Breast epithelium (tissue), 4 donors: ENCODE measurements at regions of chr4 and their contacts with region 1.

Region 1: DNA sequence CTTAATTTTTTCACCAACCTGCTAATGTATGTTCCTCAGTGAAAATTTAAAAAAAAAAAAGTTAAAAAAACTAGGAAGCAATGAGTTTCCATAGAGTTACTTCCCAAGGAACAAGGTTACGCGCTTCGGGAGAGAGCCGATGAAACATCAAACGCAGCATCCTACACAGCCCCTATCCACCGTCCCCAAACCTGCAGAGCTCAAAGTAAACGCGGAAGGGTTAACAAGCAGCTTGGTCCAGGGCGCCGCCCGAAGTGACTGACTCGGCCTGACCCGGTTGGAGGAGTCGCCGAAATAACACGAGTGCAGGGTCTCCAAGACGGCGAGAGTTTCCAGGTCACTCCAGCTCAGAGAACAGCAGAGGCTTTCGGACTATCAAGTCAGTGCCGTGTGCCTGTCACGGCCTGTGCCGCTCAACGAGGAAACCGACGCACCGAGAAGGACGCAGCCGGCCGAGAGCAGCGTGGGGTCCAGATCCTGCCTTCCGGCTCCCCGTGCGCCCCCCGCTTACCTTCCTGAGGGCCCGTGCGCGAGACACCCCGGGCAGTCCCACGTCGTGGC is 512 bp downstream of the NOP14 start:
- DNase-seq: no peak
- H3K4me3 ChIP-seq: peak overlapping the region; percentile 93 to 96 (median 93)
- H3K27ac ChIP-seq: peak overlapping the region; percentile 80 to 85
- H3K4me1 ChIP-seq: peaks cover 6 to 9% of the 10 kb centered on the region in 2 donors
- H3K27me3 ChIP-seq: no peaks in the 10 kb centered on the region
- CTCF ChIP-seq: no peak
- POLR2A ChIP-seq: no peak

Region 2: DNA sequence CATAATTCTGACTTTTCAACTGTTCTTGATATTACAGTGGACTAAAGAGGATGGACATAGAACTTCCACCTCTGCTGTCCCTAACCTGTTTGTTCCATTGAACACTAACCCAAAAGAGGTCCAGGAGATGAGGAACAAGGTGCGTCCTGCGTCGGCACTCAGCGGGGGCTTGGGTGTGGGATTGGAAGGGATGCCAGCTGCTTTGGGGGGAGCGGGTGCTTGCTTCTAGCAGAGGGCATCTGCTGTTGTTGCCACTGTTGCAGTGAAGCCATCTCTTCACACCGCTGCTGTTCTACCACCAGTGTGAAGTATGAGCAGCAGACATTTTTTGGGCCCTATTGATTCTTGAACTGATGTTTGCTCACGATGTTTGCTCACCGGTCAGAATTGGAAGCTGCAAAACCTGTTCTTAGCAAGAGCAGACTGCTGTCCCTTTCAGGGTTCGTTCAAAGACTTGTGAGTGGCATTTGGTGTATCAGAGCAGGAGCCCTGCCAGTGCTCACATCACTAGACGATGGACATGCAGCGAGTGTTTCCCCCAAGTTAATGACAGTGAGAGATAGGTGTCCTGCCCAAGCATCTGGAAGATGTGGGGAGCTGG is 54.9 kb before region 1 on chr4:
- intact Hi-C with region 1: loop called (anchors 2 kb)
- DNase-seq: no peak
- H3K4me3 ChIP-seq: no peak overlapping the region
- H3K27ac ChIP-seq: peak overlapping the region in 1 of 2 donors; percentile 27
- H3K4me1 ChIP-seq: no peaks in the 10 kb centered on the region
- H3K27me3 ChIP-seq: no peaks in the 10 kb centered on the region
- CTCF ChIP-seq: no peak
- POLR2A ChIP-seq: no peak